ENCODE measurements at regions of chr3 and their contacts with region 1.

Region 1: DNA sequence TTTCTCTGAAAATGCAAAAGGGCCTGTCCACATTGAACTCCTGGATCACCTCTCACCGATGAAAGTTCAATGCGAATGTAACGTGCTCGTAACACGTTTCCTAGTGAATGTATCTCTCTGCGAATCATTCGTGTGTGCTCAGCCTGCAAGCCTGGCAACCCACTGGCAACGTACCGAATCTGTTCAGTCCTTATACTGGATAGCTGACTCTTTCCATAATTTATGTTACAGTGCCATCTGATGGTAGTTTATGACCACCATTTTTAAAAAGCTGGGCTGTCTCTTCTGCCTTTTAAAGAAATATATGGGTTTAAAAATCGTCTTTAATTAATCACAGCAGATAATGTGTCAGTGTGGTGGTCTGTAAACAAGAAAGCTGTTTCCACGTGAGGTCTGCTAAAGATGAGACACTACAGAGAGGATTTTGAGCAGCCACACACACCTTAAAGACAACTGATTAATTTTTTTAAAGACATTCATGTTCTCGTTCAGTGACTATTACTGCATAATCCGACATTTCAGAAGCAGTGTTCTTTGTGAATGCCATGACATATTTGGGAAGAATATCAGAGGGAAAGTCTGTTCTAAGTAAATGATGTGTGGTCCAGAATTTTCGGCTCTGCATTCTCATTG is 69.4 kb upstream of the FOXP1 start:
- DNase-seq: peak in 1 of 2 donors; percentile 56
- H3K4me3 ChIP-seq: no peak overlapping the region
- H3K27ac ChIP-seq: no peak overlapping the region
- H3K4me1 ChIP-seq: peaks cover 0 to 12% (median 7%) of the 10 kb centered on the region in 4 donors
- H3K27me3 ChIP-seq: no peaks in the 10 kb centered on the region
- CTCF ChIP-seq: peak; percentile 48 to 55

Region 2: GRCh38 chr3:70531063-70531657 is 1121.7 kb before region 1 on chr3:
- intact Hi-C with region 1: loop called (anchors 5 kb)
- DNase-seq: no peak
- H3K4me3 ChIP-seq: no peak overlapping the region
- H3K27ac ChIP-seq: no peak overlapping the region
- H3K4me1 ChIP-seq: peaks cover 0 to 8% (median 2%) of the 10 kb centered on the region in 4 donors
- H3K27me3 ChIP-seq: no peaks in the 10 kb centered on the region
- CTCF ChIP-seq: peak; percentile 46 to 52

Region 3: GRCh38 chr3:71778353-71778752 is 125.5 kb after region 1 on chr3:
- intact Hi-C with region 1: no loop called
- DNase-seq: no peak
- H3K4me3 ChIP-seq: no peak overlapping the region
- H3K27ac ChIP-seq: no peak overlapping the region
- H3K4me1 ChIP-seq: no peaks in the 10 kb centered on the region
- H3K27me3 ChIP-seq: peaks cover 0 to 64% of the 10 kb centered on the region in 2 donors
- CTCF ChIP-seq: no peak

Region 4: DNA sequence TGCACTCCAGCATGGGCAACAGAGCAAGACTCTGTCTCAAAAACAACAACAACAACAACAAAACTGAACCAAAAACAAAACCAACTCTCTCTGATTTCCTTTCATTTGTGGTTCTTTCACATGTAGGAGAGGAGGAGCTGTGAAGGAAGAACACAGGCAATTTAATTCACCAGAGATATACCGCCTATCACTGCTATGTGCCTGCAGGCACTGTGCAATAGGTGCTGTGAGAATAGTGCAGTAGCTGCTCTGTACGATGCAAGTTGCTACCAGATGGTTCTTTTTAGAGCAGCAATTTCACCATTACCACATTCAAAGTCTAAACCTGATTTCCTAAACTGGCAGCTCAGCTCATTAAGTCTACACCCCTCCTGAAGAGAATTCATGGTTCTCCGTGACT is 143.4 kb after region 1 on chr3:
- intact Hi-C with region 1: no loop called
- DNase-seq: no peak
- H3K4me3 ChIP-seq: no peak overlapping the region
- H3K27ac ChIP-seq: no peak overlapping the region
- H3K4me1 ChIP-seq: no peaks in the 10 kb centered on the region
- H3K27me3 ChIP-seq: peaks cover 0 to 25% of the 10 kb centered on the region in 2 donors
- CTCF ChIP-seq: no peak

Region 5: GRCh38 chr3:71962561-71963240 is 309.8 kb after region 1 on chr3:
- intact Hi-C with region 1: no loop called
- DNase-seq: no peak
- H3K4me3 ChIP-seq: no peak overlapping the region
- H3K27ac ChIP-seq: no peak overlapping the region
- H3K4me1 ChIP-seq: no peaks in the 10 kb centered on the region
- H3K27me3 ChIP-seq: peaks cover 0 to 9% of the 10 kb centered on the region in 2 donors
- CTCF ChIP-seq: no peak

Measured in tibial artery (tissue), 4 donors.